Posterior vena cava (tissue), 2 donors: ENCODE measurements at regions of chr5 and their contacts with region 1.

Region 1: GRCh38 chr5:153964880-153965645 is 73.6 kb downstream of the FAM114A2 start:
- DNase-seq: no peak

Region 2: GRCh38 chr5:152532714-152533113 is 1432.3 kb before region 1 on chr5:
- intact Hi-C with region 1: loop called (anchors 10 kb)
- DNase-seq: no peak

Region 3: GRCh38 chr5:153490118-153491037 is 474.7 kb before region 1 on chr5 and contains the start of gene GRIA1:
- intact Hi-C with region 1: loop called (anchors 5 to 10 kb)
- DNase-seq: no peak
- total RNA-seq, gene GRIA1: 0.19 to 0.24 TPM

Region 4: DNA sequence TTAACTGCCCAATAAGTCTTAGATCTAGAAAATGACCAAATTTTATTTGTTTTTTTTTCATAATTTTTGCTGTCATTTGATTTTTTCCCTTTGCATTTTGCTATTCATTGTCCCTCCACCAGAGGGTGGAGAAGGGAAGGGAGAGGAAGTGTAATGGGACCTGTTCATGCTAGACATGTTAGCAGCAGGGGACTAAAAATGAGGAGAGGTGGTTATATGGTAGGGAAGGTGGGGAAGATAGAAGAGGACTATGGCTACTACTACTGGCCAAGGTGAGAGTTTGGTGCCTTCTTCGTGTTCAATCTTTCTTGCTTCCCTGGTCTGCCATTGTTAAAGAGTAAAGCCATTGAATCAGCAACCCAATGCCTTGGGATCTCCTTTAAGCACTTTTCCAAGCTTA is 468.2 kb before region 1 on chr5:
- intact Hi-C with region 1: loop called (anchors 5 to 10 kb)
- DNase-seq: no peak